ENCODE measurements at regions of chr16 and their contacts with region 1.

Region 1: GRCh38 chr16:68264128-68265077 is at the start of gene SLC7A6:
- DNase-seq: no peak
- ATAC-seq: peak; percentile 71
- H3K4me3 ChIP-seq: peak within 1 kb of the TSS; percentile 87
- H3K27ac ChIP-seq: peak within 1 kb of the TSS; percentile 85
- H3K4me1 ChIP-seq: peaks cover 18% of the 10 kb centered on the region
- H3K27me3 ChIP-seq: no peaks in the 10 kb centered on the region
- CTCF ChIP-seq: peak; percentile 77 to 85 (median 81); a peak in 5 of 6 replicates
- EP300 ChIP-seq: no peak
- POLR2A ChIP-seq: peak; percentile 81
- RAD21 ChIP-seq: peak; percentile 43
- polyA plus RNA-seq, gene SLC7A6: 8.2 TPM

Region 2: GRCh38 chr16:68085259-68086071 is 178.9 kb before region 1 on chr16 and contains the start of gene NFATC3:
- CTCF ChIA-PET with region 1: no interaction called
- POLR2A ChIA-PET with region 1: no interaction called
- RAD21 ChIA-PET with region 1: no interaction called
- SMC1A ChIA-PET with region 1: no interaction called
- in situ Hi-C with region 1: no loop called
- intact Hi-C with region 1: no loop called
- DNase-seq: no peak
- ATAC-seq: peak; percentile 80
- H3K4me3 ChIP-seq: peak within 1 kb of the TSS; percentile 89
- H3K27ac ChIP-seq: peak within 1 kb of the TSS; percentile 86
- H3K4me1 ChIP-seq: peaks cover 18% of the 10 kb centered on the region
- H3K27me3 ChIP-seq: no peaks in the 10 kb centered on the region
- CTCF ChIP-seq: no peak
- EP300 ChIP-seq: no peak
- POLR2A ChIP-seq: peak; percentile 80
- RAD21 ChIP-seq: no peak
- polyA plus RNA-seq, gene NFATC3: 4.2 to 5.5 TPM

Region 3: DNA sequence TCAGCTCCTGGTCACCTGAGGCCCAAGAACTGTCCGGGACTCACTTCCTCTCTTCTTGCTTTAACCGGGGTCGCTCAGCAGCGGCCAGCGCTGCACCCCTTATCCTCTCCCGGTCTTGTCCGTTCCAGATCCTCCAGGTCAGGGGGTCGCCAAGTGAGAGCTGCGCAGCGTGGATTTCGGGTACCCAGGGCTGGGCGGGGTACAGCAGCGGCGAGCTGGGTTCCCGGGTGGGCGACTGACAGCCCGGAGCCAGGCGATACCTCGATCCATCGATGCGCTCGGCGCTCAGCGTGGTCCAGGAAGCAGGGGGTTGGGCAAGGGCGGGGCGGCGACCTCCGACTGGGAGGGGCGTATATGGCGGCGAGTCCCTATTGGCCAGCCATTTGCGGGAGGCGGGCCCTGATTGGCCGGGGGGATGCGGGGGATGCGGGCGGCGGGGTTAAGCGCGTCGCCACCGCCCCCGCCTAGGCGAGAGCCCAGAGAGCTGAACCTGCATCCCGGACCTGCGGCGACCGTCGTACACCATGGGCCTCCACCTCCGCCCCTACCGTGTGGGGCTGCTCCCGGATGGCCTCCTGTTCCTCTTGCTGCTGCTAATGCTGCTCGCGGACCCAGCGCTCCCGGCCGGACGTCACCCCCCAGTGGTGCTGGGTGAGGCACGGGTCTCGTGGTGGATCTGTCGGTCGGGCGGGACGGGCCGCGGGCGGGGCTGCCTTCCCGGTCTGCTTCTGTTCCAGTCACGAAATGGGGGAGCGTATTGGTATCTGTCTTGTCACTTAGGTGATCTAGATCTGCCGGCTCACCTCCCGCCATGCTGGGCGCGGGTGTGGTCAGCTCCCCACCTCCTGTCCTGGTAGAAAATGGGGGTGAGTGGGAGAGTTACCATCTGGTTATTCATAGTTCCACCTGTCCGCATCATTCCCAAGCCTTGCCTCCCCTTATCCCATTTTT is 19.2 kb before region 1 on chr16 and contains the start of gene PLA2G15:
- CTCF ChIA-PET with region 1: interaction called, 108 read pairs
- POLR2A ChIA-PET with region 1: interaction called, 14 read pairs
- RAD21 ChIA-PET with region 1: interaction called, 17 read pairs
- SMC1A ChIA-PET with region 1: interaction called, 7 read pairs
- in situ Hi-C with region 1: no loop called
- intact Hi-C with region 1: no loop called
- DNase-seq: no peak
- ATAC-seq: peak; percentile 98
- H3K4me3 ChIP-seq: peak within 1 kb of the TSS; percentile 97
- H3K27ac ChIP-seq: peak within 1 kb of the TSS; percentile 5; the same call in 1 of the 2 replicates
- H3K4me1 ChIP-seq: peaks cover 18% of the 10 kb centered on the region
- H3K27me3 ChIP-seq: no peaks in the 10 kb centered on the region
- CTCF ChIP-seq: no peak
- EP300 ChIP-seq: 0 out of 4 replicates have a peak, but pooled peaks of 1 of the 2 experiments have one; percentile 22
- POLR2A ChIP-seq: peak; percentile 87
- RAD21 ChIP-seq: no peak
- polyA plus RNA-seq, gene PLA2G15: 0.31 to 1.1 TPM

Region 4: GRCh38 chr16:68281368-68282063 is 17.1 kb after region 1 on chr16:
- CTCF ChIA-PET with region 1: interaction called, 126 read pairs
- POLR2A ChIA-PET with region 1: interaction called, 177 read pairs
- RAD21 ChIA-PET with region 1: interaction called, 97 read pairs
- SMC1A ChIA-PET with region 1: interaction called, 253 read pairs
- in situ Hi-C with region 1: no loop called
- intact Hi-C with region 1: no loop called
- DNase-seq: no peak
- ATAC-seq: no peak
- H3K4me3 ChIP-seq: no peak overlapping the region
- H3K27ac ChIP-seq: peak overlapping the region; percentile 36; the same call in 1 of the 2 replicates
- H3K4me1 ChIP-seq: peaks cover 49% of the 10 kb centered on the region
- H3K27me3 ChIP-seq: no peaks in the 10 kb centered on the region
- CTCF ChIP-seq: no peak
- EP300 ChIP-seq: no peak
- POLR2A ChIP-seq: no peak
- RAD21 ChIP-seq: no peak

Region 5: DNA sequence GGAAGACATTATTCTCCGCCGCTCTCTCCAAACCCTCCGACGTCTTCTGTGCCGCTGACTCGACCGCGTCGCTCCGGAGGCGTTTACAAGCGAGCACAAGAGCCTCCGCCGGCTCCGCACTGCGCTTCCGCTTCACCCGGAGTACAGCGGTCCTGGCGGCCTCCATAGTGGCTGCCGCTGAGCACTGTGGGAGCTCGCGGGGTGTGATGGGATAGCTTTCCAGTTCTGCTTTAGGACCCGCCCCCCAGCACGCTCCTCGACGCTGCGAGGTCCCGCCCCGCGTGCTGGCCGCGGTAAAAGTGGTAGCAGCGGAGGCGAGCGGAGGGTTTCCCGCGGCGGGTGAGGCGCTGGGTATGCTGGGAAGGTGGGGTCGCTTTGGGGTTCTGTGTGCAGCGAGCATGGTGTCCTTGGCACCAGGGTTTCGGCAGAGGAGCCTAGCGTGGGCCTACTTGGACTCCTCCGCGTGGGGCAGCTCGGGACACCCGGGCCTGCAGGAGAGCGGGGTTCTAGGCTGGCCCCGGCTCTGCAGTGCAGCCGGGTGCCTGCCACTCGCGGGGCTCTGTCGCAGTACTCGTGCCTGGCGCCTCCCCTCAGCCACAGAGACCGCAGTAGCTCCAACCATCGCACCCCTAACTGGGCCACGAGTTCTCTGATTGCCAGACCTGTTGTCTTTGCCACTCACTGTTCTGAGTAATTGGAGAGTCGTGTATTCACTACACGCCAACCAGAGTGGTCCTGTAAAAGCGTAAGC is 46.5 kb after region 1 on chr16 and contains the starts of genes PRMT7 and SLC7A6OS:
- CTCF ChIA-PET with region 1: interaction called, 60 read pairs
- POLR2A ChIA-PET with region 1: interaction called, 20 read pairs
- RAD21 ChIA-PET with region 1: interaction called, 52 read pairs
- SMC1A ChIA-PET with region 1: interaction called, 13 read pairs
- in situ Hi-C with region 1: no loop called
- intact Hi-C with region 1: loop called (anchors 2 kb)
- DNase-seq: peak; percentile 65
- ATAC-seq: peak; percentile 99
- H3K4me3 ChIP-seq: peak within 1 kb of the TSS; percentile 95
- H3K27ac ChIP-seq: peak within 1 kb of the TSS; percentile 79
- H3K4me1 ChIP-seq: 0 out of 2 replicates have a peak, but pooled peaks cover 3% of the 10 kb centered on the region
- H3K27me3 ChIP-seq: no peaks in the 10 kb centered on the region
- CTCF ChIP-seq: no peak
- EP300 ChIP-seq: peak in 1 of 2 experiments; percentile 27; a peak in 1 of 4 replicates
- POLR2A ChIP-seq: peak; percentile 98
- RAD21 ChIP-seq: 0 out of 2 replicates have a peak, but pooled peaks have one; percentile 8
- polyA plus RNA-seq, gene PRMT7: 5.1 to 5.6 TPM
- polyA plus RNA-seq, gene SLC7A6OS: 2.9 to 6.4 TPM

Region 6: DNA sequence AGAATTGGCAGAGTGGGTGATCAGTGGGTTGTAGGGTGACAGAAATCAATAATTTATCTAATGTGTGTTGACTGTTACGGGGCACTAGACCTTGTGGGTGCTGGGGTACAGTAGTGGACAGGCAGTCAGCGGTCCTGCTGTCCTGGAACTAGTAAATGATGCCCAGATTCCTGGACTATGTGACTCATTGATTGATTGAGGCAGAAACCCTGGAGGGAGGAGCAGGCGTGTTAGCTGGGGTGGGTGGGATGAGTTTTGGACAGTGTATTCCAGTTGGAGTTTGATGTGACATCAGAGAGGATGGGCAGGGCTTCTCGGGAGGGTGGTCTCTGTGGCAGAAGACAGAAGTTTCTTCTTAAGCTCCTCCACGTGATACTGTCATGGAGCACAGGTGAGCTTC is 70.8 kb after region 1 on chr16:
- CTCF ChIA-PET with region 1: interaction called, 747 read pairs
- POLR2A ChIA-PET with region 1: interaction called, 58 read pairs
- RAD21 ChIA-PET with region 1: interaction called, 399 read pairs
- SMC1A ChIA-PET with region 1: interaction called, 198 read pairs
- in situ Hi-C with region 1: no loop called
- intact Hi-C with region 1: no loop called
- DNase-seq: no peak
- ATAC-seq: no peak
- H3K4me3 ChIP-seq: no peak overlapping the region
- H3K27ac ChIP-seq: no peak overlapping the region
- H3K4me1 ChIP-seq: peaks cover 8% of the 10 kb centered on the region
- H3K27me3 ChIP-seq: no peaks in the 10 kb centered on the region
- CTCF ChIP-seq: no peak
- EP300 ChIP-seq: no peak
- POLR2A ChIP-seq: no peak
- RAD21 ChIP-seq: no peak

Region 7: GRCh38 chr16:68512183-68512582 is 247.8 kb after region 1 on chr16:
- CTCF ChIA-PET with region 1: interaction called, 4 read pairs
- POLR2A ChIA-PET with region 1: no interaction called
- RAD21 ChIA-PET with region 1: no interaction called
- SMC1A ChIA-PET with region 1: no interaction called
- in situ Hi-C with region 1: no loop called
- intact Hi-C with region 1: loop called (anchors 5 kb)
- DNase-seq: no peak
- ATAC-seq: no peak
- H3K4me3 ChIP-seq: no peak overlapping the region
- H3K27ac ChIP-seq: no peak overlapping the region
- H3K4me1 ChIP-seq: no peaks in the 10 kb centered on the region
- H3K27me3 ChIP-seq: no peaks in the 10 kb centered on the region; a peak in 2 of 4 replicates
- CTCF ChIP-seq: no peak
- EP300 ChIP-seq: no peak
- POLR2A ChIP-seq: no peak
- RAD21 ChIP-seq: no peak

Region 8: GRCh38 chr16:68538880-68539701 is 274.7 kb after region 1 on chr16 and contains the start of gene ZFP90:
- CTCF ChIA-PET with region 1: no interaction called
- POLR2A ChIA-PET with region 1: no interaction called
- RAD21 ChIA-PET with region 1: no interaction called
- SMC1A ChIA-PET with region 1: no interaction called
- in situ Hi-C with region 1: no loop called
- intact Hi-C with region 1: no loop called
- DNase-seq: peak; percentile 38
- ATAC-seq: peak; percentile 98
- H3K4me3 ChIP-seq: peak within 1 kb of the TSS; percentile 99
- H3K27ac ChIP-seq: peak within 1 kb of the TSS; percentile 75
- H3K4me1 ChIP-seq: no peaks in the 10 kb centered on the region
- H3K27me3 ChIP-seq: no peaks in the 10 kb centered on the region
- CTCF ChIP-seq: no peak
- EP300 ChIP-seq: no peak
- POLR2A ChIP-seq: peak; percentile 80
- RAD21 ChIP-seq: no peak
- polyA plus RNA-seq, gene ZFP90: 3.3 to 3.6 TPM